ENCODE measurements at regions of chr20 and their contacts with region 1.

Region 1: GRCh38 chr20:51480507-51481270 is 61.8 kb downstream of the NFATC2 start:
- DNase-seq: peak; percentile 35
- H3K4me3 Mint-ChIP-seq: peak overlapping the region; percentile 76
- H3K27ac Mint-ChIP-seq: peak overlapping the region; percentile 96
- H3K4me1 Mint-ChIP-seq: peaks cover 85% of the 10 kb centered on the region
- H3K27me3 Mint-ChIP-seq: no peaks in the 10 kb centered on the region

Region 2: GRCh38 chr20:50913690-50914375 is 566.9 kb before region 1 on chr20:
- intact Hi-C with region 1: no loop called
- DNase-seq: no peak
- H3K4me3 Mint-ChIP-seq: no peak overlapping the region
- H3K27ac Mint-ChIP-seq: peak overlapping the region; percentile 76
- H3K4me1 Mint-ChIP-seq: peaks cover 64% of the 10 kb centered on the region
- H3K27me3 Mint-ChIP-seq: no peaks in the 10 kb centered on the region

Region 3: GRCh38 chr20:51385646-51386530 is 94.8 kb before region 1 on chr20:
- intact Hi-C with region 1: loop called (anchors 1 kb)
- DNase-seq: no peak
- H3K4me3 Mint-ChIP-seq: no peak overlapping the region
- H3K27ac Mint-ChIP-seq: no peak overlapping the region
- H3K4me1 Mint-ChIP-seq: peaks cover 62% of the 10 kb centered on the region
- H3K27me3 Mint-ChIP-seq: no peaks in the 10 kb centered on the region

Region 4: GRCh38 chr20:51428401-51429143 is 52.1 kb before region 1 on chr20:
- intact Hi-C with region 1: no loop called
- DNase-seq: no peak
- H3K4me3 Mint-ChIP-seq: no peak overlapping the region
- H3K27ac Mint-ChIP-seq: no peak overlapping the region
- H3K4me1 Mint-ChIP-seq: peaks cover 49% of the 10 kb centered on the region
- H3K27me3 Mint-ChIP-seq: no peaks in the 10 kb centered on the region

Region 5: DNA sequence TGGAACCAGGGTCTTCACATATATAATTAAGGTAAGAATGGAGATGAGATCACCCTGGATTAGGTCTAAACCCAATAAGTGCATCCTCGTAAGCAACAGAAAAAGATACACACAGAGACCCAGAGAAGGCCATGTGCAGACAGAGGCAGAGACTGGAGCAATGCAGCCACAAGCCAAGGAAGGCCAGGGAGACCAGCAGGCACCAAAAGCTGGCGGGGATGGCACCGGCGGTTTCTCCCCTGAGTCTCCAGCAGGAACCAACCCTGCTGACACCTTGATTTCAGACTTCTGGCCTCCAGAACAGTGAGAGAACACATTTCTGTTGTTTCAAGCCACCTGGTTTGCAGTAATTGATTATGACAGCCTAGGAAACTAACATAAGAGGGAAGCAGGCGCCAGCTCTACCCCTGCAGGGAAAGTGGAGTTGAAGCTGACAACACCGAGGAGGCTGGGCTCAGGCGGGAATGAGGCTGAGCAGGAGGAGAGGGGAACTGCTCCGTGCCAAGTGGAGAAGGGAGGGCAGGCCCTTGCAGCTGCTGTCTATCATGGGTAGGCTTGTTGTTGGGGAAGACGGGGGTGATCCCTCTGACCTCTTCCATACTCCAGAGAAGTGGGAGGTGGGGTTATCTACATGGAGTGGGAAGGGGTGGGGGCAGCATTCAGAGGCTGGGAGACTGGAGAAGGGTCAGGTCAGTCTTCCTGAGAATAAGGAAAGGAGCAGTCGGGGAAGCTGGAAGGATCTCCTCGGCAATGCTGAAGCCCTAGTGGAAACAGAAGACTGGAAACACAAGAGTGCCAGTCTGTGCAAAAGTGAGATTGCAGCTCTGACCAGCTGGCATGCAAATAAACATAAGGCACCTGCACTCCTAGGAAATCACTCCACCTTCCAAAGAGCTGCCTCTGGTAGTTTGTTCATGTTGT is 10.9 kb before region 1 on chr20:
- intact Hi-C with region 1: loop called (anchors 1 kb)
- DNase-seq: no peak
- H3K4me3 Mint-ChIP-seq: peak overlapping the region; percentile 18
- H3K27ac Mint-ChIP-seq: peak overlapping the region; percentile 77
- H3K4me1 Mint-ChIP-seq: peaks cover 43% of the 10 kb centered on the region
- H3K27me3 Mint-ChIP-seq: no peaks in the 10 kb centered on the region

Region 6: GRCh38 chr20:51512645-51513044 is 32.0 kb after region 1 on chr20:
- intact Hi-C with region 1: loop called (anchors 1 kb)
- DNase-seq: peak; percentile 28
- H3K4me3 Mint-ChIP-seq: no peak overlapping the region
- H3K27ac Mint-ChIP-seq: peak overlapping the region; percentile 82
- H3K4me1 Mint-ChIP-seq: peaks cover 70% of the 10 kb centered on the region
- H3K27me3 Mint-ChIP-seq: no peaks in the 10 kb centered on the region

Region 7: GRCh38 chr20:51541189-51542032 is 60.7 kb after region 1 on chr20:
- intact Hi-C with region 1: loop called (anchors 1 kb)
- DNase-seq: peak; percentile 87
- H3K4me3 Mint-ChIP-seq: peak overlapping the region; percentile 96
- H3K27ac Mint-ChIP-seq: peak overlapping the region; percentile 98
- H3K4me1 Mint-ChIP-seq: peaks cover 50% of the 10 kb centered on the region
- H3K27me3 Mint-ChIP-seq: peaks cover 16% of the 10 kb centered on the region

Region 8: GRCh38 chr20:51631011-51631950 is 150.6 kb after region 1 on chr20:
- intact Hi-C with region 1: loop called (anchors 2 kb)
- DNase-seq: peak; percentile 35
- H3K4me3 Mint-ChIP-seq: peak overlapping the region; percentile 18
- H3K27ac Mint-ChIP-seq: peak overlapping the region; percentile 82
- H3K4me1 Mint-ChIP-seq: peaks cover 58% of the 10 kb centered on the region
- H3K27me3 Mint-ChIP-seq: peaks cover 13% of the 10 kb centered on the region